ENCODE measurements at regions of chr6 and their contacts with region 1.

Region 1: GRCh38 chr6:80126657-80127345 is 20.3 kb downstream of the BCKDHB start:
- DNase-seq: no peak
- H3K4me3 ChIP-seq: no peak overlapping the region
- H3K27ac ChIP-seq: no peak overlapping the region
- H3K4me1 ChIP-seq: peaks cover 32% of the 10 kb centered on the region
- H3K27me3 ChIP-seq: no peaks in the 10 kb centered on the region
- CTCF ChIP-seq: no peak

Region 2: DNA sequence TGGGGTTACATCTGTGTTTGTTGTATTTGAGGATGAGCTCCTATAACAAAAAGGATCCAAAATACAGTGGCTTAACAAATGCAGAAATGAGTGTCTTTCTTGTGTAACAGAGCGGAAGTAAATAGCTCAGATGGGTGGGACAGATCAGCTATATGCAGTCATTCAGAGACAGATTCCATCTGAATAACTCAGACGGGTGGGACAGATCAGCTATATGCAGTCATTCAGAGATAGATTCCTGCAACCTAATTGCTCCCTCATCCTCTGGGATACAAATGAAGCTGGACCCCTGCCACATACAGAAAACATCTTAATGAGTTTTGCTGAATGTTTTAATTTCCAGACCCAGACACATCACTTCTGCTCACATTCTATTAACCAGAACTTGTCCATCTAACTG is 312.0 kb after region 1 on chr6:
- CTCF ChIA-PET with region 1: no interaction called
- POLR2A ChIA-PET with region 1: interaction called, 17 read pairs
- intact Hi-C with region 1: no loop called
- DNase-seq: peak; percentile 30 to 64
- H3K4me3 ChIP-seq: no peak overlapping the region
- H3K27ac ChIP-seq: peak overlapping the region; percentile 91
- H3K4me1 ChIP-seq: peaks cover 41% of the 10 kb centered on the region
- H3K27me3 ChIP-seq: no peaks in the 10 kb centered on the region
- CTCF ChIP-seq: no peak

Region 3: DNA sequence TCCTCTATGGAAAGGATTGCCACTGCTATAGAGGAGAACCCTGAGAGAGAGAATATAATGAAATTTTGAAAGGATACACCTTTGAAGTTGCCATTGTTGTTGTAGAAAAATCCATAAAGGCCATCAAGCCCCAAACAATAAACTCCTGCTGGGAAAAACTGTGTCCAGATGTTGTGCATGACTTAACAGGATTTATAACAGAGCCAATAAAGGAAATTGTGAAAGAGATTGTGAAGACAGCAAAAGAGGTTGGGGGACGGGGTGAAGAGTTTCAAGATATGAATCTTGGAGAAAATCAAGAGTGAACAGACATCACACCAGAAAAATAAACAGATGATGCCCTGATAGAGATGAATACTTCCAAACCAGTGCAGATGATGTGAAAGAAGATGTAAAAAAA is 376.1 kb after region 1 on chr6:
- CTCF ChIA-PET with region 1: no interaction called
- POLR2A ChIA-PET with region 1: no interaction called
- intact Hi-C with region 1: no loop called
- DNase-seq: no peak
- H3K4me3 ChIP-seq: no peak overlapping the region
- H3K27ac ChIP-seq: no peak overlapping the region
- H3K4me1 ChIP-seq: no peaks in the 10 kb centered on the region
- H3K27me3 ChIP-seq: no peaks in the 10 kb centered on the region
- CTCF ChIP-seq: no peak

Region 4: DNA sequence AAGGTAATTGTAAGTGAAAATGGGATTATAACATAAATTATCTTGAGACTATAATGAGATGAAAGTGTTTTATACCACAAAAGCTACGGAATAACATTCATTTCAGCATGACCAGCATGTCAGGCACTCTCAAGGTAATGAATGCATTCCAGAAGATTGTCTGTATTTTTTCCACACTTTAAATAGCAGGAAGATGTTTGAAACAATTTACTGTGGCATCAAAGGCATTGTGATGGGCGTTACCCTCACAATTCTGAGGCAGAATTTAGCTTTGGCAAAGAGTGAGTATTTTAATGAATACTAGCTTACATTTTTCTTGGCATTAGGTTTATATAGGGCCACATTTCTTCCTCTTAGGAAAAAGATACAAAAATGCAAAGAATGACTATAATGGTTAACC is 606.8 kb after region 1 on chr6:
- CTCF ChIA-PET with region 1: no interaction called
- POLR2A ChIA-PET with region 1: no interaction called
- intact Hi-C with region 1: no loop called
- DNase-seq: no peak
- H3K4me3 ChIP-seq: no peak overlapping the region
- H3K27ac ChIP-seq: no peak overlapping the region
- H3K4me1 ChIP-seq: no peaks in the 10 kb centered on the region
- H3K27me3 ChIP-seq: no peaks in the 10 kb centered on the region
- CTCF ChIP-seq: no peak

Measured in PC-9 (cell line).